Activated CD4-positive, alpha-beta memory T cell treated with anti-CD3 and anti-CD28 coated beads, Interleukin-2, amount 10 ng/mL, durations not matched to agents 7 days and 5 days (primary cell): ENCODE measurements at regions of chr20 and their contacts with region 1.

Region 1: GRCh38 chr20:24992487-24993205 is at the start of gene APMAP:
- DNase-seq: peak; percentile 96
- H3K4me3 Mint-ChIP-seq: peak within 1 kb of the TSS; percentile 90
- H3K27ac Mint-ChIP-seq: peak within 1 kb of the TSS; percentile 79
- H3K4me1 Mint-ChIP-seq: peaks cover 60% of the 10 kb centered on the region
- H3K27me3 Mint-ChIP-seq: peaks cover 8% of the 10 kb centered on the region
- total RNA-seq, gene APMAP: 44.1 to 46.5 TPM

Region 2: GRCh38 chr20:25022687-25023086 is 30.0 kb after region 1 on chr20:
- CTCF ChIA-PET with region 1: no interaction called
- POLR2A ChIA-PET with region 1: no interaction called
- DNase-seq: no peak
- H3K4me3 Mint-ChIP-seq: no peak overlapping the region
- H3K27ac Mint-ChIP-seq: no peak overlapping the region
- H3K4me1 Mint-ChIP-seq: no peaks in the 10 kb centered on the region
- H3K27me3 Mint-ChIP-seq: no peaks in the 10 kb centered on the region

Region 3: GRCh38 chr20:25065625-25066338 is 73.1 kb after region 1 on chr20:
- CTCF ChIA-PET with region 1: interaction called, 33 read pairs
- POLR2A ChIA-PET with region 1: interaction called, 6 read pairs
- DNase-seq: peak; percentile 74
- H3K4me3 Mint-ChIP-seq: no peak overlapping the region
- H3K27ac Mint-ChIP-seq: no peak overlapping the region
- H3K4me1 Mint-ChIP-seq: peaks cover 3% of the 10 kb centered on the region
- H3K27me3 Mint-ChIP-seq: peaks cover 49% of the 10 kb centered on the region

Region 4: GRCh38 chr20:25136643-25137559 is 144.3 kb after region 1 on chr20:
- CTCF ChIA-PET with region 1: no interaction called
- POLR2A ChIA-PET with region 1: no interaction called
- DNase-seq: no peak
- H3K4me3 Mint-ChIP-seq: no peak overlapping the region
- H3K27ac Mint-ChIP-seq: no peak overlapping the region
- H3K4me1 Mint-ChIP-seq: no peaks in the 10 kb centered on the region
- H3K27me3 Mint-ChIP-seq: no peaks in the 10 kb centered on the region

Region 5: GRCh38 chr20:25165128-25165527 is 172.5 kb after region 1 on chr20:
- CTCF ChIA-PET with region 1: no interaction called
- POLR2A ChIA-PET with region 1: no interaction called
- DNase-seq: no peak
- H3K4me3 Mint-ChIP-seq: no peak overlapping the region
- H3K27ac Mint-ChIP-seq: no peak overlapping the region
- H3K4me1 Mint-ChIP-seq: peaks cover 12% of the 10 kb centered on the region
- H3K27me3 Mint-ChIP-seq: peaks cover 15% of the 10 kb centered on the region